ENCODE measurements at regions of chr10 and their contacts with region 1.

Region 1: DNA sequence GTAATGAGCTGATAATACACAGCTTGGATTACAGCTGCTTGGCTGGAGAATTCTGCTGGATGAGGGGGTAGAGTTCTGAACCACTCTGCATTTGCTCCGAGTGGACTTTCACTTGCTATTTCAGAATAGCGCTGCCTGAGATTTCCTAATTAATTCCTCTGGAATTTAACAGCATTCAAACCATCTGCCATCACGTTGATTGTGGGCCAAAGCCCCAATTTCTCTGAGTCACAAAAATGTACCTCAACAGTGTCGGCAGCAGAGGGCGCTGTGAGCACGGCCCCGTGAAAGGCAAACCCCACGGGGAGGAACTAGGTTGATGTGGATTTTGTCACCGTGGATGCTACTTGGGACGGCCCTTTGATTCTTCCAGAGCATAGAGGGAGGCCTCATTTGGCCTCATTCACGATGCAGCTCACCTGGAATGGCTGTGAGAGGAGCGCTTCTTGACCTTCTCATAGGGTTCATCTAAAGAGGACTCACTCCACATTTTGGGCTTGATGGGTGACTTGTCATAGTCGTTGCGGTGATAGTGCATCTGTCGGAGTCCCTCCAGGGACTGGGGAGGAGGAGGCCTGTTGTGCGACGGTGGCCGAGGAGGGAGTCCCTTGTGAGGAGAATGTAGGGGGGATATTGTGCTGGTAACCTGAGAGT is 73.3 kb downstream of the PRPF18 start:
- DNase-seq: peak in 1 of 2 donors; percentile 80
- H3K4me3 ChIP-seq: no peak overlapping the region
- H3K27ac ChIP-seq: peak overlapping the region in 1 of 2 donors; percentile 3
- H3K4me1 ChIP-seq: no peaks in the 10 kb centered on the region
- H3K27me3 ChIP-seq: no peaks in the 10 kb centered on the region
- CTCF ChIP-seq: peak; percentile 87 to 96 (median 91)

Region 2: GRCh38 chr10:13624630-13625029 is 35.4 kb before region 1 on chr10:
- intact Hi-C with region 1: no loop called
- DNase-seq: no peak
- H3K4me3 ChIP-seq: no peak overlapping the region
- H3K27ac ChIP-seq: no peak overlapping the region
- H3K4me1 ChIP-seq: no peaks in the 10 kb centered on the region
- H3K27me3 ChIP-seq: no peaks in the 10 kb centered on the region
- CTCF ChIP-seq: no peak

Region 3: DNA sequence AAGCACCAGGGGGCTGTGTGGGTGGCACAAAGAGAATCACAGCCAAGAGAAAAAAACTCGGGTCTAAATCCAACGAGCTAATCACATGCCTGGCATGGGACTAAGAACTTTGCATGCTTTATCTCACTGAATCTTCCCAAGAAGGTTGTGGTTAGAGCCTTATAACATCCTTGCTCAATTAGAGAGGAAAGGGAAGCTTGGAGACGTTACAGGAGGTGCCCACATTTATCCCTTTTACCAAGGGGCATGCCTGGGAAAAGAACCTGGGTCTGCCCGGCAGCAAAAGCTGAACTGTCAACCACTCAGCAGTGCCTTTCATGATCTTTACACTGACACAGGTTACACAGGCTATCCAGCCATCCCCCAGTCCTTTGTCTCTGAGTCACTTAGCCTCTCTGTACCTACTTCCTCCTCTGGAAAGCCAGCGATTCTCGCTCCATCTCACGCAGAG is 116.9 kb after region 1 on chr10:
- intact Hi-C with region 1: loop called (anchors 1 kb)
- DNase-seq: no peak
- H3K4me3 ChIP-seq: no peak overlapping the region
- H3K27ac ChIP-seq: no peak overlapping the region
- H3K4me1 ChIP-seq: no peaks in the 10 kb centered on the region
- H3K27me3 ChIP-seq: no peaks in the 10 kb centered on the region
- CTCF ChIP-seq: no peak

Region 4: GRCh38 chr10:14093730-14094484 is 433.9 kb after region 1 on chr10:
- intact Hi-C with region 1: loop called (anchors 10 kb)
- DNase-seq: no peak
- H3K4me3 ChIP-seq: no peak overlapping the region
- H3K27ac ChIP-seq: no peak overlapping the region
- H3K4me1 ChIP-seq: no peaks in the 10 kb centered on the region
- H3K27me3 ChIP-seq: no peaks in the 10 kb centered on the region
- CTCF ChIP-seq: peak in 2 of 3 experiments; percentile 33 to 44

Measured in ascending aorta (tissue), 2 donors.